Right ventricle myocardium inferior (tissue), 1 donor: ENCODE measurements at regions of chr11 and their contacts with region 1.

Region 1: GRCh38 chr11:6251120-6251733 is 8.4 kb upstream of the CCKBR start:
- DNase-seq: peak; percentile 79
- ATAC-seq: peak; percentile 82

Region 2: DNA sequence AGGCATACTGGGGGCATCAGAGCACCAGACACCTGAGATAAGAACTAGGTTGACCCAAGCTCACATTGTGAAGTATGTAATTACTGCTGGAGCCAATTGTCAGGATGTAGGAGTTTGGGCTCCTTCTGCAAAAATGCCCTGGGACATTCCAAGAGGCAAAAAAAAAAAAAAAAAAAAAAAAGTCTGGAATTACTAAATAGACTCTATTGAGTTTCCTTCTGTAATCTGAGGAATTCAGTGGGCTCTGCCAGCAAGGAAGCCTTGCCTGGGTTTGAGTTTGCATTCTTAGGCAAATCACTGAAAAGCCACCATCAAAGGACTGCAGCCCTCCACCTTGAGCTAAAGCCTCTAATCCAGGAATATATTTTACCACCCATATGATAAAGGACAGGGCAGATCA is 77.1 kb after region 1 on chr11:
- intact Hi-C with region 1: no loop called
- DNase-seq: no peak
- ATAC-seq: no peak

Region 3: DNA sequence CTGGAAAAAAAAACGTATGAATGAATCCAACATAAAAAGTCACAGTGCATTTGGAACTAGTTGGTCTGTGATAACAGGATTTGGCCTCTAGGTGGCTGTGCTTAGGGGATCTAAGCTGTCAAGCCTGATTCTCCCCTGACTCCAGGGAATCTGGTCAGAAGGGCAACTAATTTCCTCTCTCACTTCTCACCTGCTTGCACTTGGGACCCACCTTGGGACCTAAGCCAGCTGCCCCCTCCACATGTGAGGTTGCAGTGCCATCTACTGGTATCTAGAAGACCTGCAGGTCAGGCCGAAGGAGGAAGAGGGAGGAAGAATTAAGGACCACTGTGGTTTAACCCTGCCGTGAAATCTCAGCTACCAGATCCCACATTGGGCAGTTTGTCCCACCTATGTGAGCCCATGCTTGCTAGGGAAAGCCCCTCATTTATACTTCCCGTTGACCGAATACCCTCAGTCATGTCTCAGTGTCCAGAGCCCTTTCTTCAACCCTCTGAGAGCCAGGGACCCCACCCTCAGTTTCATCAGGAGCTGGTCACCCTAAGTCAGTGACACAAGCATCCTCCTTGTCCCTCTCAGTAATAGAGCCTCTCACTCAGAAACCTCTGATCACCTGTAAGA is 102.2 kb after region 1 on chr11:
- intact Hi-C with region 1: loop called (anchors 5 kb)
- DNase-seq: peak; percentile 74
- ATAC-seq: peak; percentile 59